ENCODE measurements at regions of chr2 and their contacts with region 1.

Region 1: DNA sequence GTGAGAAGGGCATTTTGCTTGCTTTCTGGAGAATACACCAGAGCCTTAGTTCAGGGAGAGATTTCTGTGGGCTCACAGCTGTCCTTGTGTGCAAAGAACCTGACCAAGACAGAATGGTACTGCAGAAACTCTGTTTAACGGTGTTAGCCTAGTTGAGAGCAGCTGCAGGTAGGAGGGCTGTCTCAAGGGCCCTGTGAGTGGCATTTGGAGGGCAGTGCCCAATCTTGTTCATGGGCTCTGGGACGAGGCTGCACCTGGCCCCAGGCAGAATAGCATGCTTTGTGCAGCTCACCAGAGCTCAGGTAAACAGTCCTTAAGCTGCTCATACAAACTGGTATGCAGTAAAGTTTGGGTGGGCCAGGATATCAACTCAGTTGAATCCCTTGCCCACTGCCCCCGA is 16.9 kb upstream of the RGPD4 start:
- DNase-seq: no peak
- ATAC-seq: peak in 1 of 4 donors; percentile 12
- H3K4me3 ChIP-seq: no peak overlapping the region
- H3K27ac ChIP-seq: no peak overlapping the region
- H3K4me1 ChIP-seq: peaks cover 0 to 6% (median 4%) of the 10 kb centered on the region in 3 donors
- H3K27me3 ChIP-seq: no peaks in the 10 kb centered on the region
- CTCF ChIP-seq: no peak

Region 2: DNA sequence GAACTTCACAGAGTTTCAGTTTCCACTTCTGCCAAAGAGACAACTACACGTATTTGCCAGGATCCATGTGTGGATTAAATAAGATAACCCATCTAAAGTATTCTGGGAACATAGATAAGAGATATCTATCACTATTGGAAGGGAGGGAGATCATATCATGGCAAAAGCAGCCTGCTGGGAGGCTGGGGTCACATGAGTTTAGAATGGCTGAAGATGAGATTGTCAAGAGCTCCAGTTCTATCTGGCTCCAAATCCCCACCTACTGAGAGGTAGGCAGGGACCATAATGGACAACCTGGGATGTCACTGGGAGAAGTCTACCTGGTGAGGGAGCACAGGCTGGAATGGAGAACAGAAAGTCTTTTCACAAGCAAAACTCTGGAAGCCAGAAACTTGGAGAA is 731.3 kb before region 1 on chr2:
- intact Hi-C with region 1: loop called in 1 of 3 experiments (anchors 5 kb)
- DNase-seq: no peak
- ATAC-seq: no peak
- H3K4me3 ChIP-seq: no peak overlapping the region
- H3K27ac ChIP-seq: no peak overlapping the region
- H3K4me1 ChIP-seq: no peaks in the 10 kb centered on the region
- H3K27me3 ChIP-seq: no peaks in the 10 kb centered on the region
- CTCF ChIP-seq: no peak

Region 3: DNA sequence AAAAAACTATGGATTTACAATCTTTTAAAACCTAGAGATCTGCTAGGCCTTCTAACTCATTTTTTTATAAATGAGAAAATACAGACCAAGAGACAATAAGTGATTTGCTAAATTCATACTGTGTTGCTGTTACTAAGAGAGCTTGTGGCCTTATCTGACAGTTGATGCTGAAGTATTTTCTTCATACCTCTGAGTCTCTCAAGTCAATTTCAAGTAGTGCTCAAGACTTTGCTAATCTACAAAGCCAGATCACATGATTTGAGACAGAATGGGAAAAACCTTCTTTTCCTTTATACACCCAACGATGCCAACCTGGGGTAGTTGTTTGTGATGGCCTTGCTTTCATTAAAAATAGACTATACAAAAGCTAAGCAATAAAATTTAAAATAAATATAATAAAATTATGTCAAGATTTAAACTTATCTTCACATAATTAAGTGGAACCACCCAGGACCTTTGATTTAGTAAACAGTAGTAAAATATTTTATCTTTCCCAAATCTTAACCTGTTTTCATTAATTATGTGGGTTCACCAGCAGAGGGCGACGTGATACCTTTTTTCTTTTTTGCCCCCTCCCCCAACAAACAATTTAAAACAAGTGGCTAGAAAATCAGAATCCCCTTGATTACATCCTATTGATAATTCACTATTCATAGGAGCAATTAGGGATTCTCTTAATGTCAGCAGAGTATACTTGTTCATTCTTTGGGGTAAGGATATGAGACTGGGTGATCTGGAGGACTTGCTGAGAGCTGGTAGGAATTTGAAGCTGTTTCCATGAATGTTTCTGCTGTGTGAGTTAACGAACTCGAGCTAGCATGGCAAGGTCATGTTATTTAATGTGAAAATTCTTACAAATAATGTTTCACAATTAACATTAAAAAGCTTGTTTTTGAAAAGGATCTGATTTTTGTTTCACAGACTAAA is 126.9 kb after region 1 on chr2:
- intact Hi-C with region 1: no loop called
- DNase-seq: no peak
- ATAC-seq: no peak
- H3K4me3 ChIP-seq: no peak overlapping the region
- H3K27ac ChIP-seq: no peak overlapping the region
- H3K4me1 ChIP-seq: no peaks in the 10 kb centered on the region
- H3K27me3 ChIP-seq: no peaks in the 10 kb centered on the region
- CTCF ChIP-seq: peak in 2 of 4 donors; percentile 11 to 13